Calu3 (cell line): ENCODE measurements at regions of chr5 and their contacts with region 1.

Region 1: DNA sequence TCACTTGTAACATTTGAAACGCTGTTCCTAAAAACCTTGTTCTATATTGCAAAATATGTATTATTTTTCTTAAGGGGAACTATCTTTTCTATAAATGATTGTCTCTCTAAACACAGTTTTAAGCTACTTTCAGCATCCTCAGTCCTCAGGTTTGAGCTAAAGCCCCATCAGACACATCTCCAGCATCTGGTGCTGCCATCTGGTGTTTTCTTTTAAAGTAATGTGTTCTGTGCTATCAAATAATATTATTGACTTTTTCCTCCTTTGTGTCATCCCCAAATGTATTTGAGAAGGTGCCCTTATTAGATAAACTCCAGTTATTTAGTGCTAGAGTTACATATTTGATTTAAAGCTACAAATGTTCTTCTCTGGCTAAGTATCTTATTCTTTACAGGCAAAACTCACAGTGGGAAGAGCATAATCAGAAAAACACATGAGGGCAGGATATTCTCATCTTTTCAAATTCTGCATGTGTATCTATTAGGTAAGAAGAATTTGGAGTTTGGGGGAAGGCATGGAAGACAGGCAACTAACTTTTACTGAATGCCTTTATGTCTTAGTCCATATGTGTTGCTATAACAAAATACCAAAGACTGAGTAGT is 27.5 kb downstream of the ZNF474 start:
- DNase-seq: peak; percentile 36
- H3K4me3 Mint-ChIP-seq: no peak overlapping the region
- H3K27ac Mint-ChIP-seq: no peak overlapping the region
- H3K4me1 Mint-ChIP-seq: peaks cover 3% of the 10 kb centered on the region
- H3K27me3 Mint-ChIP-seq: no peaks in the 10 kb centered on the region
- CTCF ChIP-seq: peak; percentile 35

Region 2: DNA sequence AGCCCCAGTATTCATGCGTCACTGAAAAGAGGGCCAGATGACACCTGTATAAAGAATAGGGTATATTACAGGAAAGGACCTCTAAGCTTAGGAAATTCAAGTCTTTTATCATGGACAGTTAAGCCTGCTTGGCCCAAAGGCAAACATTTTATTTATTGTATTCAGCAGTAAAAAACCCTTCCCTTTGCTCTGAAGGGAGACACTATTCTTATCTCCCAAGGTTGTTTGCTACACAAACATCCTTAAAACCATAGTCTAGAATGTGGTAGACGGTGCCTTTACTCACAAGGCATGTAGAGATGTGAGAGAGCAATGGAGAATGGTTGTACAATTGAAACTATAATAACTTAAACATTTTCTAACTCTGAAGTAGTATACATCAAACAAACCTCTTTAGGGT is 271.2 kb before region 1 on chr5:
- CTCF ChIA-PET with region 1: no interaction called
- intact Hi-C with region 1: no loop called
- DNase-seq: no peak
- H3K4me3 Mint-ChIP-seq: no peak overlapping the region
- H3K27ac Mint-ChIP-seq: no peak overlapping the region
- H3K4me1 Mint-ChIP-seq: no peaks in the 10 kb centered on the region
- H3K27me3 Mint-ChIP-seq: no peaks in the 10 kb centered on the region
- CTCF ChIP-seq: no peak

Region 3: GRCh38 chr5:122091936-122092600 is 64.8 kb before region 1 on chr5:
- CTCF ChIA-PET with region 1: interaction called, 25 read pairs
- intact Hi-C with region 1: loop called (anchors 1 kb)
- DNase-seq: no peak
- H3K4me3 Mint-ChIP-seq: no peak overlapping the region
- H3K27ac Mint-ChIP-seq: no peak overlapping the region
- H3K4me1 Mint-ChIP-seq: peaks cover 7% of the 10 kb centered on the region
- H3K27me3 Mint-ChIP-seq: no peaks in the 10 kb centered on the region
- CTCF ChIP-seq: peak; percentile 57

Region 4: GRCh38 chr5:122101636-122102285 is 55.1 kb before region 1 on chr5:
- CTCF ChIA-PET with region 1: interaction called, 11 read pairs
- intact Hi-C with region 1: loop called (anchors 2 kb)
- DNase-seq: peak; percentile 13
- H3K4me3 Mint-ChIP-seq: no peak overlapping the region
- H3K27ac Mint-ChIP-seq: no peak overlapping the region
- H3K4me1 Mint-ChIP-seq: peaks cover 25% of the 10 kb centered on the region
- H3K27me3 Mint-ChIP-seq: no peaks in the 10 kb centered on the region
- CTCF ChIP-seq: peak; percentile 70